Sciatic nerve (tissue), 2 donors: ENCODE measurements at regions of chr1 and their contacts with region 1.

Region 1: DNA sequence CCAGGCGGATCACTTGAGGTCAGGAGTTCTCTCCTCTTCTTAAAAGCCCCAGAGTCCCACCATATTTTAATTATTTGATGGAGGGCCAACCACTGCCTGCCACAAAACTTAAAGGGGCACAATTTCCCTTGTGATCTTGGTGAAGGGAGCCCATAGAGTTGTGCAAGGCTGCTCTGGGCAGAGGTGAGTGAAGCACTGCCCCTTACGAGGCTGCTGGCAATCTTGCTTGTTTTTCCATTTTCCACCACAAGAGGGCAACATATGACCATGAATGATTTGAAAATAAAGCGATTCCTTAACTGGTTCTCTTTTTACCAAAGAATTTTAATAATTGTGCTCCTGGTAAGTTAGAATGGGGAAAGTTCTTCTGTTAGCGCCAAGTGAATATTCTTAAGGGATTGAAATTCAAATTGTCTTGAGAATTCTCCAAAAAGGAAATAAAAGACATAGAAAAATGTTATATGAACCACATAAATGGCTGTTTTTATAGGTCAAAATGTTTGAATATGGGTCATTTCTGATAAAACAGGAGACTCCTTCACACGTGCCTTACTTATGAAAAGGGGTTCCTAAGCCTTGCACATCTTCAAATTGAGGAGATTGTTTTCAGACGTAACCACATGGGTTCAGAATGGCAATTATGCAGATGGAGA is 22.7 kb downstream of the PGM1 start:
- DNase-seq: peak; percentile 69
- ATAC-seq: peak; percentile 82

Region 2: GRCh38 chr1:63350320-63350719 is 265.6 kb before region 1 on chr1:
- intact Hi-C with region 1: no loop called
- DNase-seq: no peak
- ATAC-seq: no peak

Region 3: DNA sequence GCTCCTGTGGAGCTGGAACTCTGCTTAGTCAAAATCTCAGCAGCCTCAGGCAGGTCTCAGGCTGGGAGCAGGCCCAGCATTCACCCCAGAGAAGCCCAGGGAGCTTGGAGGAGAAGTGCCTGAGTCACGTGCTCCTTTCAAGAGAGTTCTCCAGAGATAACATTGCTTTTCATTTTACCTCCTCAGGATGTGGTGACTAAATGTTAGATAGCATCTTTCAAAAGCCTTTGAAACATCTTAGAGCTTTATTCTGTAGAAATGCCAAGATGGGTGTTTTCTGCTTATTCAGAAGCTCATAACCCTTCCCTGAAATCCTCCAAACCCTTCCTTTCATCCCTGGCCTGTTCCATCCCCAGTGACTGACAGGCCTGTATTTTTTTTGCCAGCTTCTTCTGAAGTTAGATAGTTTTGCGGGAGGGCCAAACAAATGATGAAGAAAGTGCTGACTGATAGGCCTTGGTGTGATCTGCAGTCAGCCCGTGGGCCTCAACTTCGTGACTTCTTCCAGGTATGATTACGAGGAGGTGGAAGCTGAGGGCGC is 35.3 kb after region 1 on chr1:
- intact Hi-C with region 1: no loop called
- DNase-seq: no peak
- ATAC-seq: peak; percentile 71

Region 4: DNA sequence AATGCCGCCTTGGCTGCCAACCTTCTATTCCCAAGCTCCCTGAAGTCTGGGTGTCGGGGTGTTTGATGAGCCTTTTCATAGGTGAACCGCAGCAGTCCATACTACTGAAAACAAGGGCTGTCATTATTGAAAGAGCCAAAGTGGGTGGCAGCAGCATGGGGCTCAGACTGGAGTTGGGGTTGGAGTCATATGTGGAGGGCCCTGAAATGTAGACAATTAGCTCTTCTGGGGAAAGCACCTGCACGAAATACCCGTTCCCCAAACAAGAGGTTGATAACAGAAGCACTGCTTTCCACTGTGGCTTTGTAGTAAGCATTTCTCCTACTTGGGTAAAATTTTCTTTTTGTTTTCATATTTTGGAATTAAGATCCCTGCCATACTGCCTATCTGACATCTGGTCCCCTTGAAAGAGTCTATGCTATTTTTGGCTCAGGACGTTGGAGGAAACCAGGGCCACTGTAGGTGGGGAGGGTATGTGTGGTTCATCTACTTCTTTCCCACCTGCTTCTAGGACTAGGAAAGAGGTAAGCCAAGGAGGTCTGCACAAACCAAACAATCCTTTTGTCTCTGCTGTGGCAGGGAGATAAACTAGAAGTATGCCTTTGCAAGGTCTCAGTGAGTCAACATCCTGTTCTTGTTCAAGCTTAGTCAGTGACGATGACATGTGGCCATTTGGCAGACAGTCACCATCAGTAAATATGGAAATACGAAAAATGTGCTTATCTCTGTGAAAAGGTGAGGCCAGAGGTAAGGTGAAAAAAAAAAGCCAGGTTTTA is 390.6 kb after region 1 on chr1:
- intact Hi-C with region 1: no loop called
- DNase-seq: no peak
- ATAC-seq: peak; percentile 34

Region 5: DNA sequence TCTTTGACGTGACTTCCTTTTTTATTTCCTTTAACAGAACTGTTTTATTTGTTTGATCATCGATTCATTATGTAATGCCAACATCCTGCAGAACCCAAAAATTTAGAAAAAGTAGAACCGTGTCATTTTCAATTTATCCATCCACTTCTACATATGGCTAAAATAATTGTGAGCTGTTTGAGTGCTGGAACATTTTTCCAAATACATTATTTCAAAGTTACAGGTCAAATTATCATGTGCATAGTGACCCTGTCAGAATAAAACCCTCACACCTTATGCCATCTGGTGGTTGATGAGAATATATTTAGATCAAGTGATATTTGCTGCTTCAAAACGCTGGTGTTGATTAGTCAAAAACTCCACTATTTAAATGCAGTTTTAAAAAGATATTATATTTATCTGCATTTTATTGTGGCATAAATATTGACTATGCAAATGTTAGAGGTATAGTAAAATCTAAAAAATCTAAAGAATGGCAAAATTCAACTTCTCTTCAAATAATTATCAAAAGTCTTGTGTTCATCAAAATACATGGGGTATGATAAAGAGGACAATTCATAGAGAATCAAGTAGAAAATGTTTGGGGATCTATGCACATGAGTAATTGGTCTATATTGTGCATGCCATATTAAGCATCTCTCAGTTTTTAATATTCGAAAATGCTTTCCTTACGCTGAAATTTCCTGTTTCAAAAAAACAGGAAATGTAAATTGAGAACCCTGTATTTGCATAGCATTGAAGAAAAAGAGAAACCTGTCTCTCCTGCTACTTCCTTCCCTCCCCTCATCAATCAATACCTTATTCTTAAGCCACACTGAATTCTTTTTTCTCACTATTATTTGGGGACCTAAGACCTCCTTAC is 627.2 kb after region 1 on chr1:
- intact Hi-C with region 1: loop called (anchors 10 kb)
- DNase-seq: no peak
- ATAC-seq: peak; percentile 52